ENCODE measurements at regions of chr1 and their contacts with region 1.

Region 1: GRCh38 chr1:34859446-34860200 is at the start of gene SMIM12:
- DNase-seq: peak; percentile 97
- H3K27ac ChIP-seq: peak within 1 kb of the TSS; percentile 78
- CTCF ChIP-seq: peak; percentile 91

Region 2: GRCh38 chr1:34786521-34787325 is 72.9 kb before region 1 on chr1:
- CTCF ChIA-PET with region 1: interaction called, 10 read pairs
- POLR2A ChIA-PET with region 1: interaction called, 6 read pairs
- DNase-seq: peak; percentile 56
- H3K27ac ChIP-seq: peak overlapping the region; percentile 74
- CTCF ChIP-seq: peak; percentile 85

Measured in RWPE1 (cell line).